ENCODE measurements at regions of chr2 and their contacts with region 1.

Region 1: GRCh38 chr2:37389989-37390765 is 45.7 kb downstream of the QPCT start:
- DNase-seq: peak in 8 of 9 donors; percentile 30 to 72 (median 52)
- ATAC-seq: peak; percentile 94
- H3K4me3 ChIP-seq: peak overlapping the region; percentile 19
- H3K4me3 Mint-ChIP-seq: peak overlapping the region in 9 of 10 donors; percentile 43 to 68 (median 55)
- H3K27ac ChIP-seq: peak overlapping the region; percentile 8
- H3K27ac Mint-ChIP-seq: peak overlapping the region in 7 of 9 donors; percentile 72 to 84 (median 80)
- H3K4me1 ChIP-seq: peaks cover 25 to 27% of the 10 kb centered on the region in 2 donors
- H3K4me1 Mint-ChIP-seq: peaks cover 0 to 18% (median 0%) of the 10 kb centered on the region in 7 donors
- H3K27me3 ChIP-seq: no peaks in the 10 kb centered on the region
- H3K27me3 Mint-ChIP-seq: peaks cover 0 to 19% (median 0%) of the 10 kb centered on the region in 5 donors

Region 2: GRCh38 chr2:37156857-37157714 is 233.1 kb before region 1 on chr2 and contains the start of gene EIF2AK2:
- CTCF ChIA-PET with region 1: no interaction called
- POLR2A ChIA-PET with region 1: no interaction called
- intact Hi-C with region 1: loop called in 1 of 2 experiments (anchors 2 kb)
- DNase-seq: peak; percentile 59 to 85 (median 80)
- ATAC-seq: peak; percentile 96
- H3K4me3 ChIP-seq: peak within 1 kb of the TSS; percentile 92
- H3K4me3 Mint-ChIP-seq: peak within 1 kb of the TSS; percentile 88 to 99 (median 94)
- H3K27ac ChIP-seq: peak within 1 kb of the TSS; percentile 81
- H3K27ac Mint-ChIP-seq: peak within 1 kb of the TSS; percentile 86 to 96 (median 92)
- H3K4me1 ChIP-seq: peaks cover 18 to 25% of the 10 kb centered on the region in 2 donors
- H3K4me1 Mint-ChIP-seq: peaks cover 29 to 57% (median 48%) of the 10 kb centered on the region in 7 donors
- H3K27me3 ChIP-seq: no peaks in the 10 kb centered on the region
- H3K27me3 Mint-ChIP-seq: peaks cover 0 to 4% (median 0%) of the 10 kb centered on the region in 5 donors
- total RNA-seq, gene EIF2AK2: 21.2 to 91.9 (median 24.2) TPM

Region 3: GRCh38 chr2:37287966-37288365 is 102.2 kb before region 1 on chr2:
- CTCF ChIA-PET with region 1: interaction called, 3 read pairs
- POLR2A ChIA-PET with region 1: no interaction called
- intact Hi-C with region 1: loop called in 1 of 2 experiments (anchors 1 kb)
- DNase-seq: peak in 1 of 9 donors; percentile 13
- ATAC-seq: peak; percentile 37
- H3K4me3 ChIP-seq: no peak overlapping the region
- H3K4me3 Mint-ChIP-seq: no peak overlapping the region
- H3K27ac ChIP-seq: no peak overlapping the region
- H3K27ac Mint-ChIP-seq: peak overlapping the region in 1 of 9 donors; percentile 28
- H3K4me1 ChIP-seq: no peaks in the 10 kb centered on the region
- H3K4me1 Mint-ChIP-seq: peaks cover 0 to 7% (median 0%) of the 10 kb centered on the region in 7 donors
- H3K27me3 ChIP-seq: no peaks in the 10 kb centered on the region
- H3K27me3 Mint-ChIP-seq: no peaks in the 10 kb centered on the region

Region 4: GRCh38 chr2:37376421-37377186 is 13.6 kb before region 1 on chr2:
- CTCF ChIA-PET with region 1: interaction called, 3 read pairs
- POLR2A ChIA-PET with region 1: interaction called, 4 read pairs
- intact Hi-C with region 1: loop called (anchors 1 kb)
- DNase-seq: peak in 8 of 9 donors; percentile 27 to 69 (median 56)
- ATAC-seq: peak; percentile 86
- H3K4me3 ChIP-seq: no peak overlapping the region
- H3K4me3 Mint-ChIP-seq: peak overlapping the region in 9 of 10 donors; percentile 33 to 80 (median 63)
- H3K27ac ChIP-seq: no peak overlapping the region
- H3K27ac Mint-ChIP-seq: peak overlapping the region in 4 of 9 donors; percentile 16 to 65 (median 35)
- H3K4me1 ChIP-seq: peaks cover 13 to 17% of the 10 kb centered on the region in 2 donors
- H3K4me1 Mint-ChIP-seq: peaks cover 11 to 30% (median 17%) of the 10 kb centered on the region in 7 donors
- H3K27me3 ChIP-seq: peaks cover 0 to 6% of the 10 kb centered on the region in 2 donors
- H3K27me3 Mint-ChIP-seq: peaks cover 25 to 66% (median 53%) of the 10 kb centered on the region in 5 donors

Region 5: DNA sequence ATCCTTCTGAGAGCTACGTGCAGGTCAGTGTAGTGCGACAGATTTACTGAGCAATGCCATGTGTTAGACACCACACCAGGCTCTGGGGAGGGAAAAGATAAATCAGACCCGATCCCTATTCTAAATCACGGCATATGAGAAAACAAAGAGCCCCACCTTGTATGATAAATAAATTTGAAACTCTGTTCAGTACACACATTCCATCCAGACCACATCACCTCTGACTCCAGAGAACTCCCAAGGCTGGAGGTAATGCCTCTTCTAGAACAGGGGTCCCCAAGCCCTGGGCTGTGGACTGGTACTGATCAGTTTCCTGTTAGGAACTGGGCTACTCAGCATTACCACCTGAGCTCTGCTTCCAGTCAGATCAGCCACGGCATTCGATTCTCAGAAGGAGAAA is 31.5 kb after region 1 on chr2:
- CTCF ChIA-PET with region 1: no interaction called
- POLR2A ChIA-PET with region 1: no interaction called
- intact Hi-C with region 1: no loop called
- DNase-seq: no peak
- ATAC-seq: no peak
- H3K4me3 ChIP-seq: no peak overlapping the region
- H3K4me3 Mint-ChIP-seq: no peak overlapping the region
- H3K27ac ChIP-seq: no peak overlapping the region
- H3K27ac Mint-ChIP-seq: no peak overlapping the region
- H3K4me1 ChIP-seq: no peaks in the 10 kb centered on the region
- H3K4me1 Mint-ChIP-seq: peaks cover 0 to 2% (median 0%) of the 10 kb centered on the region in 7 donors
- H3K27me3 ChIP-seq: no peaks in the 10 kb centered on the region
- H3K27me3 Mint-ChIP-seq: peaks cover 0 to 2% (median 0%) of the 10 kb centered on the region in 5 donors

Region 6: DNA sequence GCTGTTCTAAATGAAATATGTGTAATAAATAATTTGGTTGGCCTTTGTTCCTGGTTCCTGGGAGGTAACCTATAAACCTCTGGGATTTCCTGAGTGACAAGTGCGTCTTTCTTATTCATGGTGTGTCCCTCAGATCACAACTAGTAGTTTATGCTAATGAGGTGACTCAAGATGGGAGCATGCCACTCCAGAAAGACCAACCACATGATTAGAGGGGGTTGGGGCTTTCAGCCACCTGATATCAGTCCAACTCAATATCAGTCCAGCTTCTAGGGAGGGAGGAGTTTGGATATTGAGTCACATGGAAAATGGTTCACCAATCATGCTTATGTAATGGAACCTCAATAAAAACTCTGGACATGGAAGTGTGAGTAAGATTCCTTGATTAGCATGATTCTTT is 50.9 kb after region 1 on chr2:
- CTCF ChIA-PET with region 1: no interaction called
- POLR2A ChIA-PET with region 1: no interaction called
- intact Hi-C with region 1: no loop called
- DNase-seq: no peak
- ATAC-seq: no peak
- H3K4me3 ChIP-seq: no peak overlapping the region
- H3K4me3 Mint-ChIP-seq: no peak overlapping the region
- H3K27ac ChIP-seq: no peak overlapping the region
- H3K27ac Mint-ChIP-seq: peak overlapping the region in 1 of 9 donors; percentile 41
- H3K4me1 ChIP-seq: no peaks in the 10 kb centered on the region
- H3K4me1 Mint-ChIP-seq: no peaks in the 10 kb centered on the region
- H3K27me3 ChIP-seq: peaks cover 2 to 3% of the 10 kb centered on the region in 2 donors
- H3K27me3 Mint-ChIP-seq: peaks cover 0 to 29% (median 5%) of the 10 kb centered on the region in 5 donors

Region 7: DNA sequence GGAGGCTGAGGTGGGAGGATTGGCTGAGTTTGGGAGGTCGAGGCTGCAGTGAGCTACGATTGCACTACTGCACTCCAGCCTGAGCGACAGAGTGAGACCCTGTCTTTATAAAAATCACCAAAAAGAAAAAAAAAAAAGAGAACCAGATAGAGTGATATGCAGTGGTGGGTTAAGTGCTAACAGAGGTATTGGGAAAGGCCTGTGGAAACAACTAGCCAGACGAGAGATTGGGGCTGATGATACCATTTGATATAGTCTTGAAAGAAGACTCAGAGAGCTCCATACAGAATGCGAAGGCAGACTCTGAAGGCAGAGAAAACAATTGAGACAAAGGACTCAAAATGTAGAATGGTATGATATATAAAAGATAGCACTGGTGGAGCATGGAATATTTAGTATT is 147.1 kb after region 1 on chr2:
- CTCF ChIA-PET with region 1: interaction called, 3 read pairs
- POLR2A ChIA-PET with region 1: no interaction called
- intact Hi-C with region 1: loop called in 1 of 2 experiments (anchors 5 kb)
- DNase-seq: no peak
- ATAC-seq: no peak
- H3K4me3 ChIP-seq: no peak overlapping the region
- H3K4me3 Mint-ChIP-seq: no peak overlapping the region
- H3K27ac ChIP-seq: no peak overlapping the region
- H3K27ac Mint-ChIP-seq: no peak overlapping the region
- H3K4me1 ChIP-seq: no peaks in the 10 kb centered on the region
- H3K4me1 Mint-ChIP-seq: peaks cover 0 to 5% (median 3%) of the 10 kb centered on the region in 7 donors
- H3K27me3 ChIP-seq: no peaks in the 10 kb centered on the region
- H3K27me3 Mint-ChIP-seq: peaks cover 0 to 28% (median 0%) of the 10 kb centered on the region in 5 donors

Region 8: DNA sequence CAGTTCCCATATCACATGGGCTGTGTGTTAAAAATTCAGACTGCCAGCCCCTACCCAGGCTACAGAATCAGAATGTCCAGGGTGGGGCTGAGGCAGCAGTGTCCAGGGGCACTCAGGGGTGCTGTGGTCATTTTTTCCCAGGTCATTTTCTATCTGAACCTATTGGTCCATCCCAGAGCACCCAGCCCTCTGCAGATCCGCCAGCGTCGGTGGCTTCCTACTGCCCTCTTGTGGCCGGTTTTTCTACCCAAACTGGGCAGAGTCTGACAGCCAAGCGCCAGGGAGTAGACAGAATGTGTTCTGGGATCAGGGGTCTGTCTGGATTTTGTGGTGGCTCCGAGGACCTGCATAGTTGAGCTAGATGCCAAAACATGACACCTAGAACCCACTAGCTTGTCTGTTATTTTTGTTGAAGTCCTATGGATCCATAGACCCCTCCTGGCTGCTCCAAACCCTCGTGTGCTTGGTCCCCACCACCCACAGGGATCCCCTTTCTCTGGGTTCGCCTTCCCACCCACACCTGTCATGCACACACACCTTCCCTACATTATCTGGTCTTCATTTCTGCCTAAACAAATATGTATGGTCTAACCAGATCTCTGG is 500.8 kb after region 1 on chr2:
- CTCF ChIA-PET with region 1: interaction called, 3 read pairs
- POLR2A ChIA-PET with region 1: no interaction called
- intact Hi-C with region 1: loop called (anchors 5 kb)
- DNase-seq: peak; percentile 17 to 63 (median 44)
- ATAC-seq: peak; percentile 72
- H3K4me3 ChIP-seq: no peak overlapping the region
- H3K4me3 Mint-ChIP-seq: peak overlapping the region in 6 of 10 donors; percentile 12 to 75 (median 55)
- H3K27ac ChIP-seq: no peak overlapping the region
- H3K27ac Mint-ChIP-seq: peak overlapping the region in 2 of 9 donors; percentile 35 to 71
- H3K4me1 ChIP-seq: peaks cover 25 to 33% of the 10 kb centered on the region in 2 donors
- H3K4me1 Mint-ChIP-seq: peaks cover 24 to 58% (median 45%) of the 10 kb centered on the region in 7 donors
- H3K27me3 ChIP-seq: no peaks in the 10 kb centered on the region
- H3K27me3 Mint-ChIP-seq: peaks cover 0 to 29% (median 2%) of the 10 kb centered on the region in 5 donors

Measured in naive thymus-derived CD4-positive, alpha-beta T cell (primary cell).